GM12878 (cell line): ENCODE measurements at regions of chr6 and their contacts with region 1.

Region 1: DNA sequence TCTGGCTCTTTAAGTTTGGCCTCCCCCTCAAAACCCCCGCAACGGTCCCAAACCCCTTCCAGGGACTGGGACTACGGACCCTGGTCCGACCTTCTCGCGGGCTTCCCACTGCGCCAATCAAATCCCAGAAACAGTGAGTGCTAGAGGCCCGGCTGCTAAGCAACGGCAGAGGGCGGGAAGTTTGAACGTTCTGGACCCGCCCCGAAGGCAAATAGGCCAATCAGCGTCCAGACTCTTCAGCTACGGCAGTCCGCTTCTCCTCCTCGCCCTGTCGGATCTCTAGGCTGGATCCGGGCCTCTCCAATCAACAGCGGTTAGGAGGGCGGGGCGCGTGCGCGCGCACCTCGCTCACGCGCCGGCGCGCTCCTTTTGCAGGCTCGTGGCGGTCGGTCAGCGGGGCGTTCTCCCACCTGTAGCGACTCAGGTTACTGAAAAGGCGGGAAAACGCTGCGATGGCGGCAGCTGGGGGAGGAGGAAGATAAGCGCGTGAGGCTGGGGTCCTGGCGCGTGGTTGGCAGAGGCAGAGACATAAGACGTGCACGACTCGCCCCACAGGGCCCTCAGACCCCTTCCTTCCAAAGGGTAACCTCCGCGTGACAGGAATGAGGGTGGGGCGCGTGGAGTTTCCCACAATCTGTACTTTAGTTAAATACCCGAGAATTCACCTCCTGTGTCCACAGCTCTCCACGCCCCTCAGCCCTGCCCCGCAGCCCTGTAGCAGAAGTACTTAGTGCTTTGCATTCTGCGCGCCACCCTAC is at the start of gene MSH5:
- DNase-seq: peak; percentile 98
- ATAC-seq: peak; percentile 81
- H3K4me3 ChIP-seq: peak within 1 kb of the TSS; percentile 100
- H3K27ac ChIP-seq: peak within 1 kb of the TSS; percentile 99
- H3K4me1 ChIP-seq: peaks cover 19% of the 10 kb centered on the region
- H3K27me3 ChIP-seq: no peaks in the 10 kb centered on the region
- CTCF ChIP-seq: no peak
- EP300 ChIP-seq: no peak; a peak in 1 of 4 replicates
- POLR2A ChIP-seq: peak; percentile 78
- RAD21 ChIP-seq: no peak
- polyA plus RNA-seq, gene MSH5: 9.1 to 10.1 TPM

Region 2: DNA sequence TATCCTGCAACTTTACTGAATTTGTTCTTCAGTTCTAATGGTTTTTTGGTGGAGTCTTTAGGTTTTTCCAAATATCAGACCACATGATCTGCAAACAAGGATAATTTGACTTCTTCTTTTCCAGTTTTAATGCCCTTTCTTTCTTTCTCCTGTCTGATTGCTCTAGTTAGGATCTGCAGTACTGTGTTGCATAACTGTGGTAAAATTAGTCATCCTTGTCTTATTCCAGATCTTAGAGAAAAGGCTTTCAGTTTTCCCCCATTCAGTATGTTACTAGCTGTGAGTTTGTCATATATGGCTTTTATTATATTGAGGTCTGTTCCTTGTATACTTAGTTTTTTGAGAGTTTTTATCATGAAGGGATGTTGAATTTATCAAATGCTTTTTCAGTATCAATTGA is 332.1 kb before region 1 on chr6:
- CTCF ChIA-PET with region 1: no interaction called
- POLR2A ChIA-PET with region 1: no interaction called
- RAD21 ChIA-PET with region 1: no interaction called
- SMC1A ChIA-PET with region 1: no interaction called
- in situ Hi-C with region 1: no loop called
- intact Hi-C with region 1: no loop called
- DNase-seq: no peak
- ATAC-seq: no peak
- H3K4me3 ChIP-seq: no peak overlapping the region
- H3K27ac ChIP-seq: no peak overlapping the region
- H3K4me1 ChIP-seq: peaks cover 5% of the 10 kb centered on the region; the same call in 1 of the 2 replicates
- H3K27me3 ChIP-seq: no peaks in the 10 kb centered on the region
- CTCF ChIP-seq: no peak
- EP300 ChIP-seq: no peak
- POLR2A ChIP-seq: no peak
- RAD21 ChIP-seq: no peak

Region 3: GRCh38 chr6:31541658-31542521 is 197.9 kb before region 1 on chr6 and contains the start of gene DDX39B:
- CTCF ChIA-PET with region 1: interaction called, 5 read pairs
- POLR2A ChIA-PET with region 1: interaction called, 6 read pairs
- RAD21 ChIA-PET with region 1: interaction called, 3 read pairs
- SMC1A ChIA-PET with region 1: no interaction called
- in situ Hi-C with region 1: no loop called
- intact Hi-C with region 1: loop called (anchors 2 kb)
- DNase-seq: peak; percentile 93
- ATAC-seq: peak; percentile 81
- H3K4me3 ChIP-seq: peak within 1 kb of the TSS; percentile 94
- H3K27ac ChIP-seq: peak within 1 kb of the TSS; percentile 97
- H3K4me1 ChIP-seq: no peaks in the 10 kb centered on the region
- H3K27me3 ChIP-seq: no peaks in the 10 kb centered on the region
- CTCF ChIP-seq: no peak
- EP300 ChIP-seq: no peak
- POLR2A ChIP-seq: peak; percentile 96
- RAD21 ChIP-seq: no peak
- polyA plus RNA-seq, gene DDX39B: 271 to 277 TPM

Region 4: GRCh38 chr6:31665501-31666336 is 74.1 kb before region 1 on chr6 and contains the start of gene CSNK2B:
- CTCF ChIA-PET with region 1: interaction called, 5 read pairs
- POLR2A ChIA-PET with region 1: interaction called, 7 read pairs
- RAD21 ChIA-PET with region 1: interaction called, 3 read pairs
- SMC1A ChIA-PET with region 1: interaction called, 3 read pairs
- in situ Hi-C with region 1: no loop called
- intact Hi-C with region 1: loop called (anchors 5 kb)
- DNase-seq: peak; percentile 91
- ATAC-seq: peak; percentile 89
- H3K4me3 ChIP-seq: peak within 1 kb of the TSS; percentile 93
- H3K27ac ChIP-seq: peak within 1 kb of the TSS; percentile 94
- H3K4me1 ChIP-seq: peaks cover 37% of the 10 kb centered on the region
- H3K27me3 ChIP-seq: no peaks in the 10 kb centered on the region
- CTCF ChIP-seq: no peak
- EP300 ChIP-seq: no peak
- POLR2A ChIP-seq: peak; percentile 93
- RAD21 ChIP-seq: no peak
- polyA plus RNA-seq, gene CSNK2B: 286 to 361 TPM

Region 5: GRCh38 chr6:31702819-31703522 is 36.8 kb before region 1 on chr6 and contains the start of gene ABHD16A:
- CTCF ChIA-PET with region 1: interaction called, 10 read pairs
- POLR2A ChIA-PET with region 1: interaction called, 23 read pairs
- RAD21 ChIA-PET with region 1: interaction called, 6 read pairs
- SMC1A ChIA-PET with region 1: interaction called, 18 read pairs
- in situ Hi-C with region 1: no loop called
- intact Hi-C with region 1: loop called (anchors 2 kb)
- DNase-seq: peak; percentile 95
- ATAC-seq: peak; percentile 96
- H3K4me3 ChIP-seq: peak within 1 kb of the TSS; percentile 96
- H3K27ac ChIP-seq: peak within 1 kb of the TSS; percentile 91
- H3K4me1 ChIP-seq: peaks cover 9% of the 10 kb centered on the region; the same call in 1 of the 2 replicates
- H3K27me3 ChIP-seq: no peaks in the 10 kb centered on the region
- CTCF ChIP-seq: 0 out of 6 replicates have a peak, but pooled peaks of 1 of the 3 experiments have one; percentile 11
- EP300 ChIP-seq: no peak
- POLR2A ChIP-seq: peak; percentile 88
- RAD21 ChIP-seq: no peak
- polyA plus RNA-seq, gene ABHD16A: 7.5 to 14.5 TPM

Region 6: DNA sequence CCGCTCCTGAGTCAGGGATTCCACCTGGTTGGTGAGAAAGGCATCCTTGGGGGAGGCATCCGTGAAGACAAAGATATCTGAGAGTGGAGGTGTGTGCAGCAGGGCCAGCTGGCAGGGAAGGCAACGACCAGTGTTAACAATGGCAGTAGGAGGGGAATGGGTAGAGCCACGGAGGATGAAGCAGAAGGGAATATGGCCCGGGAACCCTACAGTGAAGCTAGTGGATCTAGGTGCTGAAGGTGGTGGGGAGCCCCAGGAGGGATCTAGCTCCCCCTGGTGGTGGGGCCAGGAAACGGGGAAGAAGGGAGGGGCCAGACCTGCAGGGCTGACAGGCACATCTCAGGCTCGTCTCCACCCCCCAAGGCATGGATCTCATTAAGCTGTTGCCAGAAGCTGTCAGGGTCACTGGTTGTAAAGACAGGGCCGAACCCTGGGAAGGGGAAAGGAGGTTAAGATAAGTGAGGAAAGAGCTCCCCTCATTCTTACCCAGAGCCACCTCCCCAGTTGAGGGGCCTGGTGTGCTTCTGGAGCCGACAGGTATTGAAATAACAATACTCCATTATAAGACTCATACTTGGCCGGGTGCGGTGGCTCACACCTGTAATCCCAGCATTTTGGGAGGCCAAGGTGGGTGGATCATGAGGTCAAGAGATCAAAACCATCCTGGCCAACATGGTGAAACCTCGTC is 30.0 kb after region 1 on chr6:
- CTCF ChIA-PET with region 1: interaction called, 208 read pairs
- POLR2A ChIA-PET with region 1: interaction called, 27 read pairs
- RAD21 ChIA-PET with region 1: interaction called, 36 read pairs
- SMC1A ChIA-PET with region 1: interaction called, 42 read pairs
- in situ Hi-C with region 1: no loop called
- intact Hi-C with region 1: no loop called
- DNase-seq: peak; percentile 36
- ATAC-seq: peak; percentile 97
- H3K4me3 ChIP-seq: no peak overlapping the region
- H3K27ac ChIP-seq: no peak overlapping the region
- H3K4me1 ChIP-seq: no peaks in the 10 kb centered on the region
- H3K27me3 ChIP-seq: no peaks in the 10 kb centered on the region
- CTCF ChIP-seq: peak; percentile 91 to 95 (median 91)
- EP300 ChIP-seq: no peak
- POLR2A ChIP-seq: no peak
- RAD21 ChIP-seq: peak; percentile 72

Region 7: DNA sequence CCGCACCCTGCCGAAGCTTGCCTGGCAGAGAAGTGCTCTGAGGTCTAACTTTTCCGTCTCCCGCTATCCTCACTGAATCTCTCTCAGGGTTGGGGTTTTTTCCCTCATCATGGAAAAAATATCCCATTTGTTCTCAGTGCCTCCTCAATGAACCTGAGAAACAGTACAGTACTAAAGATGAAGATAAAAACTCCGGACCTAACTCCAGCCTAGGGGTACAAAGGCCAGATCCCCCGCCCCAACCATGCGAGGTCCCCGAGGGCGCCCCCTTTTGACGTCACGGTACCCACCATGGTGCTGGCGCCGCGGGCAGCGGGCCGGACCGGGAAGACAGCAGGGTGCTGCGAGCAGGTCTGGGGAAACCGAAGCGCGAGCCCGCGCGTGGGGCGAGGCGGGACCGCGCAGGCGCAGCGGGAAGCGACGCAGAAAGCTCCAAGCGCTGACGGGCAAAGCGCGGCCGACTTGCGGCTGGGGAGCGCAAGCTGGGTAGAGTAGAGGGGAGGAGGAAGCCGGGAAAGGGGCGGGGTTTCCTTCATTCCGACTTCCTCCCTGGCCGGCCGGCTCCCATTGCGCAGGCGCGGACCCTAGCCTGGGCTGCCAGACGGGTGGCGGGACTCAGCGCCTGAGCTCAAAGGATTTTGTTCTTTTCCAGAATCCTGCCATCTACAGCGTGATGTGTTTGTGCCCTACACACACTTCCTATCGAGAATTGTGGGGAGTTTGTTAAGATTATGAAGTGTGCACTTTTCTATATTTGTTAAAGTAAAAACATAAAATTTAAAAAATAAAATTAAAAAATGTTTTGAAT is 66.9 kb after region 1 on chr6 and contains the start of gene LSM2:
- CTCF ChIA-PET with region 1: interaction called, 7 read pairs
- POLR2A ChIA-PET with region 1: interaction called, 65 read pairs
- RAD21 ChIA-PET with region 1: interaction called, 37 read pairs
- SMC1A ChIA-PET with region 1: interaction called, 13 read pairs
- in situ Hi-C with region 1: no loop called
- intact Hi-C with region 1: no loop called
- DNase-seq: peak; percentile 74
- ATAC-seq: peak; percentile 98
- H3K4me3 ChIP-seq: peak within 1 kb of the TSS; percentile 92
- H3K27ac ChIP-seq: peak within 1 kb of the TSS; percentile 81
- H3K4me1 ChIP-seq: peaks cover 5% of the 10 kb centered on the region
- H3K27me3 ChIP-seq: no peaks in the 10 kb centered on the region
- CTCF ChIP-seq: peak; percentile 24 to 34 (median 24); a peak in 3 of 6 replicates
- EP300 ChIP-seq: no peak
- POLR2A ChIP-seq: peak; percentile 92
- RAD21 ChIP-seq: no peak
- polyA plus RNA-seq, gene LSM2: 245 to 248 TPM

Region 8: GRCh38 chr6:31834434-31835198 is 94.8 kb after region 1 on chr6:
- CTCF ChIA-PET with region 1: interaction called, 26 read pairs
- POLR2A ChIA-PET with region 1: interaction called, 122 read pairs
- RAD21 ChIA-PET with region 1: interaction called, 29 read pairs
- SMC1A ChIA-PET with region 1: interaction called, 30 read pairs
- in situ Hi-C with region 1: no loop called
- intact Hi-C with region 1: no loop called
- DNase-seq: peak; percentile 50
- ATAC-seq: peak; percentile 72
- H3K4me3 ChIP-seq: peak overlapping the region; percentile 82
- H3K27ac ChIP-seq: peak overlapping the region; percentile 96
- H3K4me1 ChIP-seq: peaks cover 20% of the 10 kb centered on the region
- H3K27me3 ChIP-seq: no peaks in the 10 kb centered on the region
- CTCF ChIP-seq: no peak
- EP300 ChIP-seq: no peak; a peak in 2 of 4 replicates
- POLR2A ChIP-seq: peak; percentile 99
- RAD21 ChIP-seq: no peak

Region 9: GRCh38 chr6:31882344-31882743 is 142.5 kb after region 1 on chr6:
- CTCF ChIA-PET with region 1: no interaction called
- POLR2A ChIA-PET with region 1: no interaction called
- RAD21 ChIA-PET with region 1: no interaction called
- SMC1A ChIA-PET with region 1: no interaction called
- in situ Hi-C with region 1: no loop called
- intact Hi-C with region 1: no loop called
- DNase-seq: no peak
- ATAC-seq: no peak
- H3K4me3 ChIP-seq: no peak overlapping the region
- H3K27ac ChIP-seq: no peak overlapping the region
- H3K4me1 ChIP-seq: no peaks in the 10 kb centered on the region
- H3K27me3 ChIP-seq: no peaks in the 10 kb centered on the region
- CTCF ChIP-seq: no peak
- EP300 ChIP-seq: no peak
- POLR2A ChIP-seq: no peak
- RAD21 ChIP-seq: no peak